ENCODE measurements at regions of chr9 and their contacts with region 1.

Region 1: GRCh38 chr9:95808011-95808410 is 67.5 kb upstream of the ERCC6L2 start:
- DNase-seq: no peak
- H3K4me3 ChIP-seq: no peak overlapping the region
- H3K27ac ChIP-seq: no peak overlapping the region
- H3K4me1 ChIP-seq: no peaks in the 10 kb centered on the region
- H3K27me3 ChIP-seq: no peaks in the 10 kb centered on the region
- CTCF ChIP-seq: no peak
- POLR2A ChIP-seq: no peak

Region 2: GRCh38 chr9:95756986-95757385 is 51.0 kb before region 1 on chr9:
- intact Hi-C with region 1: no loop called
- DNase-seq: peak in 1 of 2 donors; percentile 26
- H3K4me3 ChIP-seq: no peak overlapping the region
- H3K27ac ChIP-seq: peak overlapping the region; percentile 64 to 71
- H3K4me1 ChIP-seq: no peaks in the 10 kb centered on the region
- H3K27me3 ChIP-seq: peaks cover 0 to 9% of the 10 kb centered on the region in 2 donors
- CTCF ChIP-seq: no peak
- POLR2A ChIP-seq: no peak

Region 3: DNA sequence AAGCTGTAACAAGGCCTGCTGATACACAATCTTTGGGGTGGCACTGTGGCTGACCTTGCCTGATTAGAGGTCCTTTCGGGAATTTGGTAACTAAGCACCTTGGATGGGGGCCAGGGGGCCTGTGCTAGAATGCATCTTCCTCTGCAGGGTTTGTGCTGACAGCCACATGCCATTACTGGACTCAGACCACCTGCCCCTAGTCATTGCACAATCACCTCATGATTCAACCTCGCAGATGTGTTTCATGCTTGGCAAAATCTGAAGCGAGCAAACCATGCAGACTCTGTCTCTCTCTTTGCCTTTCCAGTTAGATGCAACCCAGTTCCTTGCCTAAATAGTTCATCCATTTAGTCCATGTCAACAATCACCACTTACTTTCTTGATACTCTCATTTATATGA is 29.1 kb before region 1 on chr9:
- intact Hi-C with region 1: loop called (anchors 1 kb)
- DNase-seq: no peak
- H3K4me3 ChIP-seq: no peak overlapping the region
- H3K27ac ChIP-seq: no peak overlapping the region
- H3K4me1 ChIP-seq: no peaks in the 10 kb centered on the region
- H3K27me3 ChIP-seq: no peaks in the 10 kb centered on the region
- CTCF ChIP-seq: no peak
- POLR2A ChIP-seq: no peak

Region 4: GRCh38 chr9:95981761-95982390 is 173.9 kb after region 1 on chr9:
- intact Hi-C with region 1: no loop called
- DNase-seq: no peak
- H3K4me3 ChIP-seq: no peak overlapping the region
- H3K27ac ChIP-seq: no peak overlapping the region
- H3K4me1 ChIP-seq: no peaks in the 10 kb centered on the region
- H3K27me3 ChIP-seq: no peaks in the 10 kb centered on the region
- CTCF ChIP-seq: no peak
- POLR2A ChIP-seq: no peak

Measured in breast epithelium (tissue), 4 donors.